RWPE1 (cell line): ENCODE measurements at regions of chr11 and their contacts with region 1.

Region 1: GRCh38 chr11:69810289-69811118 is 8.7 kb downstream of the FGF3 start:
- DNase-seq: no peak
- H3K27ac ChIP-seq: no peak overlapping the region
- CTCF ChIP-seq: no peak

Region 2: GRCh38 chr11:69842746-69843528 is 32.4 kb after region 1 on chr11:
- CTCF ChIA-PET with region 1: no interaction called
- POLR2A ChIA-PET with region 1: interaction called, 11 read pairs
- DNase-seq: no peak
- H3K27ac ChIP-seq: no peak overlapping the region
- CTCF ChIP-seq: no peak

Region 3: GRCh38 chr11:69854719-69855118 is 44.2 kb after region 1 on chr11:
- CTCF ChIA-PET with region 1: no interaction called
- POLR2A ChIA-PET with region 1: no interaction called
- DNase-seq: peak; percentile 73
- H3K27ac ChIP-seq: no peak overlapping the region
- CTCF ChIP-seq: no peak

Region 4: DNA sequence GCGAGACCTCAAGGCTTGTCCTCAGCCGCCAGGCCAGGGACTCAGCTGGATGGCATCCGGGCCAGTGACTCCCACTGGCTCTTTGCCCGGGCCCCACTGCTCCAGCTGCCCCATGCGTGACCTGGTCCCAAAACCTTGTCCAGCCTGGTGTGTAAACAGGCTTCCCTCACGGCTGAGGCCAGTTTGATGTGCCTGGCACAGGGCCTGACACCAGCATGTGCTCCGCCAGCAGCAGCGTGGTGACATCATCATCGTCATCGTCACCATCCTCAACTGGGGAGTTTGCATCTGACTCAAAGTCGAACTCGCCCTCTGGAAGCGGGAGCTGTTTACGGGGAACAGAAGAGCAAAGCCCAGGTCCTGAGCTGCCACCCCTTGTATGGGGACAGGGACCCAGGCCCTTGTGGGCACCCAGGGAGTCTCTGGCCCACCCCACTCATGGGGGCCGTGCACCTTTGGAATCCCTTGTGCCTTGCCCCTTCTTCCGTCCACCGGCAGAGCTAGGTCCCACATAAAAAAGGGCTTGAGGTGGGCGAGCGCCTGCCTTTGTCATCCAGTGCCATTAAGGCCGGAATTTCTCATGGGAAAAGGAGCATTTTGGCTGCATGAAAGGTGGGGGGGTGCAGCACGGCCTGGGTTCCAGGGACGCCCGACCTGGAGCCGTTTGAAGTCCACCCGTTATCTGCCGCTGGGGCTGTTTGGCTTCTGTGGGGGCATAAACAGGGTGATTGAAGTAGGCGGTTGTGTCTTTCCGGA is 57.4 kb after region 1 on chr11:
- CTCF ChIA-PET with region 1: no interaction called
- POLR2A ChIA-PET with region 1: no interaction called
- DNase-seq: no peak
- H3K27ac ChIP-seq: no peak overlapping the region
- CTCF ChIP-seq: no peak